Right ventricle myocardium inferior (tissue), 1 donor: ENCODE measurements at regions of chr1 and their contacts with region 1.

Region 1: GRCh38 chr1:59759156-59759925 is 55.4 kb upstream of the HOOK1 start:
- DNase-seq: peak; percentile 89
- ATAC-seq: peak; percentile 96

Region 2: GRCh38 chr1:58739856-58740466 is 1019.4 kb before region 1 on chr1:
- intact Hi-C with region 1: loop called (anchors 1 kb)
- DNase-seq: no peak
- ATAC-seq: no peak

Region 3: DNA sequence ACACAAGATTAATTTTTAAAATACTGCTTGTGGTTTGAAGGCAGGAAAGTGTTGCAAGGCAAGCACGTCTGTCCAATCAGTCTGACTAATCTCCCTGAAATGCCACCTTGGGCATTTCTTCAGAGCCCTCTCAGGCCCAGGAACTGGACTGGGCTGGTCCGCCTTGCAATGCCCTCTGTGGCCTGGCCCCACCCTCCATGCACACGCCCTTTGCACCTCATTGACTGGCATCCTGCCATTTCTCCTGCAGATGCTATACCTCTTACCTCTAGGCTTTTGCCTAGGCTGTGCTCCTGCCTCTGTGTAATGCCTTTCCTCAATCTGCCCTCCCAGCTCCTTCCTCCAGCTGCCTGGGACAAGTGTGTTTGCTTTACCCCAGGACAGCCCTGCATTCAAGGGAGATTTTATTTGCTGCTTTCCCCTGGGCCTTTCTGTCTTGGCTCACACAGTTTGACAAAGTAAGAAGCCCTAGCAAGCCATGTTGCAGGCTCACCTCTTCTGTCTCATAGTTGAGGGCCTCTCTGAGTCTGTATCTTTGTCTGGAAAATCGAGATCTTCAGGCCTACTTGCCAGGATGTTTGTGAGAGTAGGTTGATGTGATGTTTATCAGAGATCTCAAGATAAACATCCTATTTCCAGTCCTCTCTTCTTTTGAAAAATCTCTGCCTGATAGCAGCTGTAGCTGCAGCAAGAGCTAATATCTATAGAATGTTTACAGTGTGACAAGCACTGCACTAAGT is 826.3 kb before region 1 on chr1:
- intact Hi-C with region 1: no loop called
- DNase-seq: no peak
- ATAC-seq: peak; percentile 38

Region 4: DNA sequence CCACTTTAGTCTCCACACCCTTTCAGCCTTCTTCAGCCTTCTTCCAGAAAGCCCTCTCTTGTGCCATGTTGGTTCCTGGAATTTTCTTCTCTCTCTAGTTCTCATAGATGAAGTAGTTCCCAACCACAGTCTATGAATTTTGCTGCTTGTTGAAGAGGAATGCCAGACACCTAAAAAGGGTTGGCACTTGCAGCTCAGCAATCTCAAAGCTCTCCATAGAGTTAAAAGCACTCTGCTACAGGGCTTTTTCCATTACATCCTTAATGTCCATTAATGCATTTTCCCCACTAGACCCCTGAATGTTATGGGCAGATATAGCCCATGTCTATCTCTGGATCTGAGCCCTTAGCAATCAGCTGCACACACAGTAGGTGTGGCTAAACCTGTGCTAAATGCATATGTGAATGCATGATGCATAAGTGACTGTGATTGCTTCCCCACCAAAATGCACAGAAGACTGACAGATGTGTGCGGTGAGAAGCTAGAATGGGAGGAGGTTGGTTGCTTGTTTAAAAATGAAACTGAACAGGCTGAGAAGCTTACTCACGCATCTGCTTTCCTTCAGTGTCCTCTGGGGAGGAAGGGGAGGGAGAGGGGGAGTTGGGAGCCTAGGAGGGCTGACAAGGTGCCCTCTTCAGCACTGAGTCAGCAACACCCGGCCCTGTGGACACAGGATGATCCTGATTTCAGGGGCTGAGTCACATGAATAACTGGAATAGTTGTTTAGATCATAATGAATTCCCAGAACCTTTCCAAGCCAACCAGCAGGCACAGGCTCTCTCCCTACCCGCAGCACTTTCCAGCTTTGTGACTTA is 608.6 kb before region 1 on chr1:
- intact Hi-C with region 1: loop called (anchors 10 kb)
- DNase-seq: peak; percentile 81
- ATAC-seq: peak; percentile 95

Region 5: DNA sequence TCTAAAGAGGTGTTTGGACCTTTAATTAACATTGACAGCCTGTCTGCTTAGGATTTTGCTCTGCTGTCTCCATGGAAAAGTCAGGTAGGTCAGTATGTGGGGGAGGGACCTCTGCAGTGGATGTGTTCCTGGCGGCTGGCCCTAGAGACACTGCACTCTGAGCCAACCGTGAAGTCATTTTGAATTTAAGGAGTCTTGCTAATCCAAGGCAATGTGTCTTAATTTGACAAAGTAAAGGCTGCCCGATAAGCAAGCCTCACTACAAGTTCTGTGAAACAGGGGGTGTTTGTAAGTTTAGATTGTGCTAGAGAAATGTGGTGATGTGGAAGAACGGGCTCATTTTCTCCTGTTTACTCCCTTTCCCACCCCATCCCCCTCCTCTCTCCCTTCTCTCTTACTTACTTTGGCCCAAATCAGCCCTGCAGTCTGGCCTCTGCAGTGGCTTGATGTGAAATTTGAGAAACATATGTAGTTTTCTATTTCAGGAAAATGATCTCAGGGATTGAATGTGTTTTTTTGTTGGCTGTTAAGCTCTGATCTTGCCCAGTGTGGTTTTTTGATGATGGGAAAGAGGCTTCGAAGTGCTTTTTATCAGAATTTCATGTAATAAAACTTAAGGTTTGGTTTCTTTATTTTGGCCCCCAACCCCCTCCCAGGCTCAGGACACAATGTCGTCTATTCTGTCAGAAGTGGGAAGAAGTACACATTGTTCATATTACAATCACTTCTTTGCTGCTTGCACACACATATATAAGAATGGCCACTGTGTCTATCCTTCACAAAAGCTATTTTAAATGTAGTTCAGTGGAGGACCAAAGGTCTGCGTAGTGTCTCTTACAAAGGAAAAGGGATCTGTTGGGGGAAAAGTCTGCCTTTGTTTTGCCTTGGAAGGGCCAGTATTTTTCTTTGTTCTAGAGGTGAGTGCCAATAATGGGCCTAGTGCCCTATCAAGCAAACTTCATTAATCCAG is 365.8 kb before region 1 on chr1:
- intact Hi-C with region 1: loop called (anchors 5 kb)
- DNase-seq: peak; percentile 79
- ATAC-seq: peak; percentile 92